ENCODE measurements at regions of chr15 and their contacts with region 1.

Region 1: DNA sequence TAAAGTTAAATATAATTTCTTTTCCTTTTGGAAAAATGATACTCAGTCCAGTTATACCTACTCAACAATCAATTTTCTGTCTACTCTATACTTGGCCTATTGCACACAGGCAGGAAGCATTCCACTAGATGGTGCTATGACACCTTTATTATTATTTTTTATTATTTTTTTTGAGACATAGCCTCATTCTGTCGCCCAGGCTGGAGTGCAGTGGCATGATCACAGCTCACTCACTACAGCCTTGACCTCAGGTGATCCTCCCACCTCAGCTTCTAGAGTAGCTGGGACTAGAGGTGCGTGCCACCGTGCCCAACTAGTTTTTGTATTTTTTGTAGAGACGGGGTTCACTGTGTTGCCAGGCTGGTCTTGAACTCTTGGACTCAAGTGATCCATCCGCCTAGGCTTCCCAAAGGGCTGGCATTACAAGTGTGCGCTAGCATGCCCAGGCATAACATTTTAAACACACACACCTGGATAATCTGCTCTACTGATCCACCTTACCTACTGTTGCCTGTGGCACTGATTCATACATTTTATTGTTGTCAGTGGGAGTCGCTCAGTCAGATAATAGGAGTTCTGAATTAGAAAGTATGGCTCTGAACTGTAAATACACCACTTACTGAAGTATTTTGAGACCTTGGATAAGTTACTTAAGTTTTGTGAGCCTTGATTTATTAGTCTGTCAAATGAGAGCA is 56.2 kb downstream of the EIF3J start:
- DNase-seq: no peak
- ATAC-seq: peak; percentile 72
- H3K4me3 ChIP-seq: no peak overlapping the region
- H3K27ac ChIP-seq: no peak overlapping the region
- H3K4me1 ChIP-seq: peaks cover 7% of the 10 kb centered on the region; the same call in 1 of the 2 replicates
- H3K27me3 ChIP-seq: no peaks in the 10 kb centered on the region
- CTCF ChIP-seq: peak; percentile 42 to 54 (median 42); a peak in 5 of 6 replicates
- EP300 ChIP-seq: no peak
- POLR2A ChIP-seq: no peak
- RAD21 ChIP-seq: peak; percentile 53

Region 2: DNA sequence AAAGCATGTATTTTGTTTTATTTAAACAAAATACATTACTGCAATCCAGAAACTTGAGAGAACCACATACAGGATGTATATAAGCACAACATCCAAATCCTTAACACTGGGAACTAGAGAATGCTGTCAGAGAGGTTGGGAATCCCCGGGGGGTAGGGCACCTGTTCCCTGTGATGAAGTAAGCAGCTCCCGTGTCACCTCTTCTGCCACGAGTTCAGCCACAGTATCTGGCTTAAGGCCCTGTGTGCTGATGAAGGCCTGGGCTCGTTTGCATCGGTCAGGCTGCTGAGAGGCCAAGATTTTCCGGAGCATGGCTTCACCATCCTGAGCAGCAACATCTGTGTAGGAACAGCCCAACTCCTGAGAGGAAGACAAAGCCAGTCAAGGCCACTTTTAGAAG is 19.8 kb before region 1 on chr15:
- CTCF ChIA-PET with region 1: interaction called, 32 read pairs
- POLR2A ChIA-PET with region 1: no interaction called
- RAD21 ChIA-PET with region 1: no interaction called
- SMC1A ChIA-PET with region 1: interaction called, 8 read pairs
- in situ Hi-C with region 1: no loop called
- intact Hi-C with region 1: no loop called
- DNase-seq: no peak
- ATAC-seq: no peak
- H3K4me3 ChIP-seq: no peak overlapping the region
- H3K27ac ChIP-seq: no peak overlapping the region
- H3K4me1 ChIP-seq: no peaks in the 10 kb centered on the region
- H3K27me3 ChIP-seq: no peaks in the 10 kb centered on the region
- CTCF ChIP-seq: no peak
- EP300 ChIP-seq: no peak
- POLR2A ChIP-seq: no peak
- RAD21 ChIP-seq: no peak